Activated B cell treated with CpG ODN at 0.5 μM for 24 hours (primary cell): ENCODE measurements at regions of chr15 and their contacts with region 1.

Region 1: GRCh38 chr15:71443538-71443937 is 328.3 kb downstream of the THSD4 start:
- DNase-seq: no peak
- ATAC-seq: no peak
- H3K4me3 Mint-ChIP-seq: no peak overlapping the region
- H3K27ac Mint-ChIP-seq: no peak overlapping the region
- H3K4me1 Mint-ChIP-seq: peaks cover 3% of the 10 kb centered on the region
- H3K27me3 Mint-ChIP-seq: peaks cover 2% of the 10 kb centered on the region
- CTCF ChIP-seq: peak; percentile 65

Region 2: GRCh38 chr15:70825841-70826240 is 617.7 kb before region 1 on chr15:
- CTCF ChIA-PET with region 1: interaction called, 11 read pairs
- POLR2A ChIA-PET with region 1: no interaction called
- intact Hi-C with region 1: no loop called
- DNase-seq: no peak
- ATAC-seq: no peak
- H3K4me3 Mint-ChIP-seq: no peak overlapping the region
- H3K27ac Mint-ChIP-seq: no peak overlapping the region
- H3K4me1 Mint-ChIP-seq: no peaks in the 10 kb centered on the region
- H3K27me3 Mint-ChIP-seq: peaks cover 13% of the 10 kb centered on the region
- CTCF ChIP-seq: no peak

Region 3: DNA sequence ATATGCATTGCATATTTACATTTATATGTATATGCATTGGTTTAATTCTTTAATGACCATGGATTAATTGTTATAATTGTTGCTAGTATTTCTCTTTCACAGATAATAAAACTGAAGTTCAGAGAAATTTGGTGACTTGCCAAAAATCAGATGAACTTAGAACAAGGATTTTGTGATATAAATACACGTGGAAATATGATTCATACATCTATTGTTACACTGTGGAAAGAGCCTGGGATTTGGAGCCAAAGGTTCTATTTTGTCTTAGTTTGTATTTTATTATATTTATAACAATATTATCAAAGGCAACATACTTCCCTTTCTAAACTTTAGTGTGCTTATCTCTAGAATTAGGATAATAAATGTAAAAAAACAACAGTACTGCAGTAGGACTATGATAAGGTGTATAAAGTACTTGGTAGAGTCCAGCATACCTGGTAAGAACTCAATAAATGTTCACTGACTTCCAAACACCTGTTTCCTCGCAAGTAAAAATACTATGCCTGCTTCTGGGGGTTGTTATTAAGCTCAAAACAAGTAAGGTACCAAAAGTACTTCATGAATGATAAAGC is 14.6 kb after region 1 on chr15:
- CTCF ChIA-PET with region 1: no interaction called
- POLR2A ChIA-PET with region 1: no interaction called
- intact Hi-C with region 1: no loop called
- DNase-seq: no peak
- ATAC-seq: no peak
- H3K4me3 Mint-ChIP-seq: no peak overlapping the region
- H3K27ac Mint-ChIP-seq: no peak overlapping the region
- H3K4me1 Mint-ChIP-seq: no peaks in the 10 kb centered on the region
- H3K27me3 Mint-ChIP-seq: peaks cover 5% of the 10 kb centered on the region
- CTCF ChIP-seq: no peak

Region 4: DNA sequence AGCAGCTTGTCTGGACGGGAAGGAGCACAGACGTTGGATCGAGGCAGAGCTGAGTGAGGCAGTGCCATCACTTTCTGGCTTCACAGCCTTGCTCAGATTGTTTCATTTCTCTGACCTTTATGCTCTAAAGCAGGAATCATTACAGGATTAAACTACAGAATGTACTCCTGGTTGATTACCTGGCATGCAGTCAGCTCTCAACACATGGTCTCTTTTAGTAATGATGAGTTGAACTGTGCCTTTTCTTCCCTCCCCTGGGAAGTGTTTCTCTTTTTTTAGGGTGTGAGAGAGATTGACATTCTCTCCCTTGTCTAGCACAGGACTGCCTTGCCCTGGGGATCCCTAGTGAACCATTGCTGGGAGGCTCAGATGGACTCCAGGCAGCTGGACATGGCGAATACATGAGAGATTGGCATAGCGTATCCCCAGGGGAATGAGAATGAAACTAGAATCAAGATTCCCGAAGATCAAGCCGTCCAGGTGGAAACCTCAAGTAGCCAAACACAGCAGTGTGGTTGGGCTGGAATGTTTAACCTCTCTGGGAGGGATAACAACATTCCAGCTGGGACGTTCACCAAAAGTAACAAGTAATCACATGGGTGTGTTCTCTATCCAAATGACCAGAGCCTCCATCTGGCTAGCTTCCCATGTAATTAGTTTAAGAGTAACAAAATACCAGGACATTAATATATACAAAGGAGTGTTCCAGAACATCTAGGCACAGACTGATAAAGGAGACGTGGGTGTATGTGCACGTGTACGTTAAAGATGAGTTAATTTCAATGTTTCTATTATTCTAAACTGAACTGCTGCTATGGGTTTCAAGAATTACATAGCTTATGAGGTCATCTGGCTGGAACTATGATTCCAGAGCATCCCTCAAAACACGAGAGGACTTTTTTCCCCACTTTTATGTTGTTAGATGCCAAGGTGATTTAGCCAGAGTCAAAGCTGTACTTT is 248.2 kb after region 1 on chr15:
- CTCF ChIA-PET with region 1: no interaction called
- POLR2A ChIA-PET with region 1: no interaction called
- intact Hi-C with region 1: no loop called
- DNase-seq: no peak
- ATAC-seq: no peak
- H3K4me3 Mint-ChIP-seq: no peak overlapping the region
- H3K27ac Mint-ChIP-seq: no peak overlapping the region
- H3K4me1 Mint-ChIP-seq: no peaks in the 10 kb centered on the region
- H3K27me3 Mint-ChIP-seq: peaks cover 17% of the 10 kb centered on the region
- CTCF ChIP-seq: no peak